ENCODE measurements at regions of chr13 and their contacts with region 1.

Region 1: DNA sequence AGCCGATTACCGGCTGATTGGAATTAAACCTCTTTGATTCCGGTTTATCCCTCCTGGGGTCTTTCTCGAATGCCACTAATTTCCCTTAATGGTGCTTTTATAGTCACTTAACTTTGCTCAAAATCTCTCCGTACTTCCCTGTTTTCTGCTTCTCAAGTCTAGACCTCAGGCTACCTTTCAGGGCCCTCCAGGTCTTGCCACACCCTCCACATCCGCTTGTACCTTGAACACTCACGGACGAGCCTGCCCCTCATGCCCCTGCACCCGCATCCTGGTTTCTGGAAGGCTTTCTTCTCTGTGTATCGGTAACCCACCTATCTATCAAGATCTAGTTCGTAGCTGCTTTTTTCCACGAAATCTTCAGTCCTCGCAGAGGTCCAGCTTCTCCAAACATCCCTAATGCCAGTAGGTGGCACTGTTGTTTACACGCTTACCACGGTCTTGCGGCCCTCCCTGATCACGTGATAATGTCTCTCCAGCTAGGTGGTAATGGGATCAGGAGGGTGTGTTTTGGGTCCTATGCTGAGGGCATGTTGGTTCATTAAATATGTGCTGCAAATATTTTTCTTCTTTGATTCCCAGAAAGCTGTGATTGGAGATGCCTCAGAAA is 13.8 kb downstream of the ATP12A start:
- DNase-seq: no peak
- ATAC-seq: peak; percentile 58 to 72
- H3K4me3 ChIP-seq: no peak overlapping the region
- H3K27ac ChIP-seq: no peak overlapping the region
- H3K4me1 ChIP-seq: peaks cover 3% of the 10 kb centered on the region
- H3K27me3 ChIP-seq: no peaks in the 10 kb centered on the region

Region 2: GRCh38 chr13:24727731-24728601 is 34.0 kb after region 1 on chr13:
- intact Hi-C with region 1: loop called in 3 of 4 experiments (anchors 2 to 5 kb)
- DNase-seq: peak; percentile 59 to 85 (median 69)
- ATAC-seq: peak; percentile 93 to 95
- H3K4me3 ChIP-seq: no peak overlapping the region
- H3K27ac ChIP-seq: no peak overlapping the region
- H3K4me1 ChIP-seq: no peaks in the 10 kb centered on the region
- H3K27me3 ChIP-seq: no peaks in the 10 kb centered on the region

Region 3: DNA sequence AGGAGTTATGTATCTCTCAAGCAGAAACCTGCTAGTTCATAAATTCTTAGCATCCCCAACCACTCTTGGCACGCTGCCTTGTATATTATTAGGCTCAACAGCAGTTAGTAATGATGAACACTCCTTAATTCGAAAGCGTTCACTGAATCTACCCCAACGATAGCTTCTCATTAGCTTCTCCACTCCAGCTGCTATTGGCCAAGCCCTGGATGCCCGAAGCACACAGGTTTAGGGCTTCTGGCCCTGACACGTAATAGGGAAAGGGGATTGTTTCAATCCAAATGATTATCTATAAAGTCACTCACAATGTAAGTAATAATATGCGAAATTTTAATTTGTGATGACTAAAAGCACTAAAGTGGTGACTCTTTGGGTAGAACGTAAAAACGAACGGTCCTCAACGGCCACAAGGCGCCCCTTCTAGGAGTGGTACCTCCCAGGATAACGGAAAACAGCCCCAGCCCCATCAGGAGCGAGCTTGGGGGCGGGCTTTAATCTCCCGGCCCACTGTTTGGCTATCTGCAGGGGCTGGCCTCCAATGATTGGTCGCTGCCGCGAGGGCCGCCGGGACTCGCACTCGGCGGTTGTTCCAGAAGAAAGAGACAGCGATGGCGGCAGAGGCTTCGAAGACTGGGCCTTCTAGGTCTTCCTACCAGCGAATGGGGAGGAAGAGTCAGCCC is 69.8 kb after region 1 on chr13 and contains the start of gene RNF17:
- intact Hi-C with region 1: no loop called
- DNase-seq: peak in 2 of 3 donors; percentile 34 to 45
- ATAC-seq: no peak
- H3K4me3 ChIP-seq: no peak within 1 kb of the TSS
- H3K27ac ChIP-seq: no peak within 1 kb of the TSS
- H3K4me1 ChIP-seq: no peaks in the 10 kb centered on the region
- H3K27me3 ChIP-seq: no peaks in the 10 kb centered on the region
- total RNA-seq, gene RNF17: 1.1 TPM in 1 of 4 donors, not detected in the others

Region 4: DNA sequence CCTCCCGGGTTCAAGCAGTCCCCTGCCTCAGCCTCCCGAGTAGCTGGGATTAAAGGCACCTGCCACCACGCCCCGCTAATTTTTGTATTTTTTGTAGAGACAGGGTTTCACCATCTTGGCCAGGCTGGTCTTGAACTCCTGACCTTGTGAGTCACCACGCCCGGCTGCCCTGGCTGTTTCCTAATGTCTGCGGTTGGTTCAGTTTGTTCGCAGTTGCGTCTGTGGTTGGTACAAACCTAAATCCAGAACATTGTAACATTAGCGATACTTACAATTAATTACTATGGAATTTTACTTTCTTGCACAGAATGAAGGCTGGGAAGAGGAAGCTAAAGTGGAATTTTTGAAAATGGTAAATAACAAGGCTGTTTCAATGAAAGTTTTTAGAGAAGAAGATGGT is 108.1 kb after region 1 on chr13:
- intact Hi-C with region 1: no loop called
- DNase-seq: no peak
- ATAC-seq: no peak
- H3K4me3 ChIP-seq: no peak overlapping the region
- H3K27ac ChIP-seq: no peak overlapping the region
- H3K4me1 ChIP-seq: no peaks in the 10 kb centered on the region
- H3K27me3 ChIP-seq: no peaks in the 10 kb centered on the region

Measured in right cardiac atrium (tissue), 5 donors.